Activated CD4-positive, alpha-beta memory T cell treated with anti-CD3 and anti-CD28 coated beads for 36 hours (primary cell): ENCODE measurements at regions of chr7 and their contacts with region 1.

Region 1: GRCh38 chr7:139777948-139778841 is at the start of gene HIPK2:
- DNase-seq: peak; percentile 74
- H3K4me3 Mint-ChIP-seq: peak within 1 kb of the TSS; percentile 95
- H3K27ac Mint-ChIP-seq: peak within 1 kb of the TSS; percentile 90
- H3K4me1 Mint-ChIP-seq: peaks cover 36% of the 10 kb centered on the region
- H3K27me3 Mint-ChIP-seq: peaks cover 15% of the 10 kb centered on the region
- total RNA-seq, gene HIPK2: 18.9 to 19.1 TPM

Region 2: DNA sequence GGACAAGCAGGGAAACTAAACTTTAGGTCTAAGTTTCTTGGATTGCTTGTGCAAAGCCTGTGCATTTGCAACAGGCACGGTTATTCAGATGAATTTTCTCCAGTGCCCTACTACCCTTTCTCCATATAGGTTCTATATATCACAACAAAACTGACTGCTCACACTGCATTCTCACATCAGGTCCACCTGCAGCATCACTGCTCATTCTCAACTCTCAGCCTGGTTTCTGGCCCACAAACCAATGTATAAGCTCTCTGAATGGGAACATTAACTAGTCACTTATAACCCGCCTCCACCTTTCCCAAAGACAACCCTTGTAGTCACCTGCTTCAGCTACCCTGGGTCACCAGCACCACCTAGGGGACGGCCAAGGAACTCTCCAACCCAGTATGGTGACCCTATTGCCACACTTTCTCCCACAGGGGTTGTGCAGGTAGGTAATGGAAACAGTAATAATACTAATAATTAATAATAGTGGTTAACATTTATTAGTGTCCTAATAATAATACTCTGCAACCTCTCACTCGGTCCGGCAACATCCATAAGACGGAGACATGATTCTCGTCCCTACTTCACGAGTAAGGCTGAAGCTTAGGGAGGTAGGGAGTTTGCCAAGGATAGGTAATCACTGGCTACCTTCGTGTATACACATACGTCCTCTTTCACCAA is 157.4 kb before region 1 on chr7:
- CTCF ChIA-PET with region 1: no interaction called
- POLR2A ChIA-PET with region 1: no interaction called
- intact Hi-C with region 1: no loop called
- DNase-seq: peak; percentile 78
- H3K4me3 Mint-ChIP-seq: no peak overlapping the region
- H3K27ac Mint-ChIP-seq: no peak overlapping the region
- H3K4me1 Mint-ChIP-seq: peaks cover 12% of the 10 kb centered on the region
- H3K27me3 Mint-ChIP-seq: no peaks in the 10 kb centered on the region

Region 3: GRCh38 chr7:139673230-139673629 is 105.0 kb before region 1 on chr7:
- CTCF ChIA-PET with region 1: no interaction called
- POLR2A ChIA-PET with region 1: interaction called, 4 read pairs
- intact Hi-C with region 1: loop called (anchors 1 kb)
- DNase-seq: peak; percentile 73
- H3K4me3 Mint-ChIP-seq: peak overlapping the region; percentile 3
- H3K27ac Mint-ChIP-seq: peak overlapping the region; percentile 74
- H3K4me1 Mint-ChIP-seq: peaks cover 40% of the 10 kb centered on the region
- H3K27me3 Mint-ChIP-seq: no peaks in the 10 kb centered on the region

Region 4: DNA sequence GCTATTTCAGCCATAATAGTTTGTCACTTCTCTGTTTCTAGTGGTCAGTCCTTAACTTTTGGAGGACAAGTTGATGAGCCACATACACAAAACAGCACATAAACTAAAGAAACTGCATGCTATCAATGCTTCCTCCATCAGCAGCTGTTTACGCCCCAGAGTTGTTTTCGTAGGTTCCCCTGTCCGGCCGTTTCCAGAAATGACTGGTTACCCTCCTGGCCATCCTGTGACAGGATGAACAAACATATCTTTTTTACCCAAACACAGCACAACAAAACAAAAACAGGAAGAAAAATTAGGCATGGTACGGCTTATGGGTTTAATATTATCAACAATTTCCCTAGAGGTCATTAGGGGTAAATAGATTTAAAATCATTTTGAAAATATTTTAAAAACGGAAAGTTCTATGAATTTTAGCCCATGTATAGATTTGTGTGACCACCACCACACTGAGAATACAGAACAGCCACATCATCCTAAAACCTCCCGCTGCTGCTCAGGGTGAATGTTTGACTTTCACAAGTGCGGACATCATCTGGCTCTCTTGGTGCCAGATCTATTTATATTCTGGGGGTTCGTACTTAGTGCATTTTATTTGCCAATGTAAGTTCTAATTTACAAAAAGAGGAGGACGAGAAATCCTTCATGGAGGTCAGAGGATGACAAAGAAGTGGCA is 75.2 kb before region 1 on chr7:
- CTCF ChIA-PET with region 1: no interaction called
- POLR2A ChIA-PET with region 1: no interaction called
- intact Hi-C with region 1: no loop called
- DNase-seq: no peak
- H3K4me3 Mint-ChIP-seq: no peak overlapping the region
- H3K27ac Mint-ChIP-seq: no peak overlapping the region
- H3K4me1 Mint-ChIP-seq: peaks cover 10% of the 10 kb centered on the region
- H3K27me3 Mint-ChIP-seq: no peaks in the 10 kb centered on the region

Region 5: GRCh38 chr7:139767561-139767982 is 10.6 kb before region 1 on chr7:
- CTCF ChIA-PET with region 1: interaction called, 4 read pairs
- POLR2A ChIA-PET with region 1: interaction called, 3 read pairs
- intact Hi-C with region 1: loop called (anchors 1 kb)
- DNase-seq: no peak
- H3K4me3 Mint-ChIP-seq: no peak overlapping the region
- H3K27ac Mint-ChIP-seq: peak overlapping the region; percentile 70
- H3K4me1 Mint-ChIP-seq: peaks cover 64% of the 10 kb centered on the region
- H3K27me3 Mint-ChIP-seq: no peaks in the 10 kb centered on the region

Region 6: DNA sequence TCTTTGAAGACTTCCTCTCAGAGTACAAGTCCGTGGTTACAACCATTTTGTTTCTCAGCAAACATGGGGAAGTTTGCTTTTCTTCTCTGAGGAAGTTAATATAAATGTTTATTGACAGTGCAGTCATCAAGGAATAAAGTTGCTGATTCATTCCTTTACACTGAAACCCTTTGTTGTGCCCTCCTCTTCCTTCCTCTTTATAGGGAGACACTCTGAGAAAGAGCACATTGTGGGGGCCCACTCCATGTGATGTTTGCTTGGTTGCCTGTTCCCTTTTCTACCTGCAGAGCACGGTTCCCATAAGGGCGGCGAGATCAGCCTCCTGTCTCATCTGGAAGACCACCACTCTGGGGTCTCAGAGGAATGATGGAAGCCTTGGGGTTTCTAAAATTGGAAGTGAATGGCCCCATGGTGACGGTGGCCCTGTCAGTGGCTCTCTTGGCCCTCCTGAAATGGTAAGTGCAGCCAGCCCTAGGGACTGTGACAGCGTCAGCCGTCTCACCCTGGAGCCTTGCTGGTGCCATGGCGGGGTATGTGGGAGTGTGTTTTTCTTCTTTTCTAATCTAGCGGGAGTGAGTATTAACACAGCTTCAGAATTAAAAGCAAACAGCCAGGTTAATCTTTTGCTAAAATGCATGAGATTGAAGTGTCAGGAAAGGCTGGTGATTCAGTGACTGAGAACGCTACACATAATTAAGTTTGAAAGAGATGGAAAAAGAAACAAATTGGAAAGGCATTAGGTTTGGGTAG is 51.0 kb after region 1 on chr7 and contains the start of gene TBXAS1:
- CTCF ChIA-PET with region 1: no interaction called
- POLR2A ChIA-PET with region 1: no interaction called
- intact Hi-C with region 1: loop called (anchors 1 kb)
- DNase-seq: peak; percentile 36
- H3K4me3 Mint-ChIP-seq: peak within 1 kb of the TSS; percentile 73
- H3K27ac Mint-ChIP-seq: peak within 1 kb of the TSS; percentile 88
- H3K4me1 Mint-ChIP-seq: peaks cover 28% of the 10 kb centered on the region
- H3K27me3 Mint-ChIP-seq: peaks cover 4% of the 10 kb centered on the region
- total RNA-seq, gene TBXAS1: 4.8 to 5.3 TPM

Region 7: DNA sequence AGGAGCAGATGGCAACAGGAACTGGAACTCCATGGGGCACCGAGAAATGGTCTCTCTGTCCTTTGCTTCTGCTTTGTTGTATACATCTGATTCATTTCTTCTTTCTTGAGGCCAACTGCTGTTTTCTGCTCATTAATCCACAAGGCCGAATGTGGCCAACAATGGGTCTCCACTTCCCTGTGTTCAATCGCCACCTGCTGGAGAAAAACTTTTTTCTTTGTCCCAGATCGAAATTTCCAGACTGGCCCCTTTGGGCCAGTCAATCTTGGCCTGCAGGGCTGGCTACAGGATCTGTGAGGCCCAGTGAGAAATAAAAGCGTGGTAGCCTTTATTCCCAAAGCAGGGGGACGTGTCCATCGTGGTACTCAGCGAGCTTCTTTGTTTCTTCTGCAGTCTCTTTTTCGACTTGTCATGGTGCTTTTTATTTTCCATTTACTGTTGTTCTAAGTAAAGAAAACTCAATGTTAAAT is 225.8 kb after region 1 on chr7:
- CTCF ChIA-PET with region 1: interaction called, 4 read pairs
- POLR2A ChIA-PET with region 1: no interaction called
- intact Hi-C with region 1: loop called (anchors 1 kb)
- DNase-seq: peak; percentile 43
- H3K4me3 Mint-ChIP-seq: no peak overlapping the region
- H3K27ac Mint-ChIP-seq: no peak overlapping the region
- H3K4me1 Mint-ChIP-seq: no peaks in the 10 kb centered on the region
- H3K27me3 Mint-ChIP-seq: no peaks in the 10 kb centered on the region